Activated CD4-positive, alpha-beta memory T cell treated with anti-CD3 and anti-CD28 coated beads for 36 hours (primary cell): ENCODE measurements at regions of chr1 and their contacts with region 1.

Region 1: DNA sequence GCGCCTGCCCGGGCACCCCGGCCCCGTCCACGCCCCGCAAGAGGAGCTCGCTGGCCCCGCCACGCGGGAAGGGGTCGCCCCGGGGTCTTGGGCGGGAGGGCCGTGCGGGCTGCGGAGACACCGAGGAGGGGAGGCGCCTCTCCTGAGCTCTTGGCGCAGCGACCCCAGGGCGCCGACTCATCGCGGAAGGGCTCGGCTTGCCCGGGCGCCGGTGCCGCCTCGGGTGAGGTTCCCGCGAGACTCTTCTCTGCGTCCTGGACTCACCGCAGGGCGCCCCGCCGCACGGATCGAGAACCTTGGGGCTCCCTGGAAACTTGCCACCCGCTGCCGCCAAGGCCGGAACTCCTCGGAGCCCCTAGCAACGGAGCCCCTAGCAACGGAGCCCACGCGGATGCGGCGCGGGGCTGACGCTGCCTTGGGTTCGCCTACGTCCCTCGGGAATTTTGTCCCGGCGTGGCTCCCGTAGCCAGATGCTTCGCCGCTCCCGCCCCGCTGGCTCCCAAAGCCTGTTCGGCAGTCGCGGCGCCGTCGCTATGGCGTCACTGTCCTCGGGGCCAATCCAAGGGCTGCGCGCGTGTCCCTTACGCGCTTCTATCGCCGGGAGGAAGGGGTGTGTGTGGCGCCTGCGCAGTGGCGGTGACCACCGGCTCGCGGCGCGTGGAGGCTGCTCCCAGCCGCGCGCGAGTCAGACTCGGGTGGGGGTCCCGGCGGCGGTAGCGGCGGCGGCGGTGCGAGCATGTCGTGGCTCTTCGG is at the start of gene ATAD3A:
- DNase-seq: peak; percentile 99
- H3K4me3 Mint-ChIP-seq: peak within 1 kb of the TSS; percentile 84
- H3K27ac Mint-ChIP-seq: peak within 1 kb of the TSS; percentile 86
- H3K4me1 Mint-ChIP-seq: peaks cover 13% of the 10 kb centered on the region
- H3K27me3 Mint-ChIP-seq: no peaks in the 10 kb centered on the region
- total RNA-seq, gene ATAD3A: 45.7 to 46.7 TPM

Region 2: DNA sequence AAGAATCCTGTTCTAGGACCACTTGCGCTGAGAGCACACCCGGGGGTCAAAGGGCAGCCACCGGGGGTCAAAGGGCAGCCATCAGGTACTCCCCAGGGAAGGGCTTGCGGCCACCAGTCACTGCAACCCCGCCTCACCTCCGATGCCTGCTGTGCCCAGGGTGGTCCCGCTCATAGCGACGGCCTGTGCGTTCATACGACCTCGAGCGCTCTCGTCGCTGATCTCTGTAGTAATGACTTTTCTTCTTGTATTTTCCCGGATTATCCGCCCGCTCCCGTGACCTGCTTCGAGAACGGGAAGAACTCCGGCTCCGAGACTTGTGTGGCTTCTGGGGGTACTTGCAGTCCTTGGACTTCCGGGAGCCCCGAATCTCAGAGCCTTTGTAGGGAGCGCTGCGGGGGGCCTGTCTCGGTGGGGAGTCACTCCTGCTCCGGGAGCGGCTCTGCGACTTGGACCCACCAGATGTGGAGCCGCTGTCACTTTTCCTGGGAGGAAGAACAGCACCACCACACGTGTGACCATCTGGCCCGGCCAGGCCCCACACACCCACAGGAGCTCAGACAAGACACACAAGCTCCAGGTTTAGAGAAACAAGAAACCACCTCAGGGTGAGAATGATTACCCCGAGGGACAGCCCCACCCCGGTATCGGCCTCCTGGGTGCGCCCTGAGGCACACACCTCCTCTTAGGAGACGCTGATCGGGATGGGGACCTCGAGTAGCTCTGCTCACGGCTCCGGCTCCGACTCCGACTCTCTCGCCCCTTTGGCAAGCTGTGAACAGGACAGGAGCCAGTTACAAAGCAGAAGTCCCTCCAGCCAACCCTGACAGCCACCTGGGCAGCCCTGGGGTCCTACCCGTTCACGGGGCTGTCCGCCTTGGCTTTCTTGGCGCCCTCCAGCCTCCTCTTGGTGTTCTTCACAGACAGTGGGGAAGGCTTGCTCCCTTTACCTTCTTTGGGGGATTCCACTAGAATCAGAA is 124.3 kb before region 1 on chr1:
- CTCF ChIA-PET with region 1: no interaction called
- POLR2A ChIA-PET with region 1: no interaction called
- intact Hi-C with region 1: no loop called
- DNase-seq: no peak
- H3K4me3 Mint-ChIP-seq: no peak overlapping the region
- H3K27ac Mint-ChIP-seq: no peak overlapping the region
- H3K4me1 Mint-ChIP-seq: no peaks in the 10 kb centered on the region
- H3K27me3 Mint-ChIP-seq: no peaks in the 10 kb centered on the region

Region 3: GRCh38 chr1:1406817-1407635 is 104.7 kb before region 1 on chr1 and contains the start of gene MRPL20:
- CTCF ChIA-PET with region 1: no interaction called
- POLR2A ChIA-PET with region 1: no interaction called
- intact Hi-C with region 1: loop called (anchors 10 kb)
- DNase-seq: peak; percentile 98
- H3K4me3 Mint-ChIP-seq: peak within 1 kb of the TSS; percentile 93
- H3K27ac Mint-ChIP-seq: peak within 1 kb of the TSS; percentile 94
- H3K4me1 Mint-ChIP-seq: peaks cover 48% of the 10 kb centered on the region
- H3K27me3 Mint-ChIP-seq: no peaks in the 10 kb centered on the region
- total RNA-seq, gene MRPL20: 122 to 123 TPM

Region 4: DNA sequence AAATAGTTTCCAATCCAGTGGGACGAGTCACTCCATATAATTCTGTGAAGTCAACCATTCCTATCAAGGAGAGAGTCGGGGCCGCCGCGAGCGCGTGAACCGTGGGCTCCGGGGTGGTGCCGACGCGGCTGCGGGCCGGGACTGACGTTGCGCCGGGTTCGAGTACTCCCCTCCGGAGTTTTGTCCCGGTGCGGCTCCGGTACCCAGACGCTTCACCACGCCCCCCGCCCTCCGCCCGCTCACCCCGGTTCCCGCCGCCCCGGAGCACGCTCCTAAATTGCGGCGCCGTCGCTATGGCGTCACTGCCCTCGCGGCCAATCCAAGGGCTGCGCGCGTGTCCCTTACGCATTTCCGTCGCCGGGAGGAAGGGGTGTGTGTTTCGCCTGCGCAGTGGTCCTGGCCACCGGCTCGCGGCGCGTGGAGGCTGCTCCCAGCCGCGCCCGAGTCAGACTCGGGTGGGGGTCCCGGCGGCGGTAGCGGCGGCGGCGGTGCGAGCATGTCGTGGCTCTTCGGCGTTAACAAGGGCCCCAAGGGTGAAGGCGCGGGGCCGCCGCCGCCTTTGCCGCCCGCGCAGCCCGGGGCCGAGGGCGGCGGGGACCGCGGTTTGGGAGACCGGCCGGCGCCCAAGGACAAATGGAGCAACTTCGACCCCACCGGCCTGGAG is 40.2 kb before region 1 on chr1 and contains the start of gene ATAD3B:
- CTCF ChIA-PET with region 1: no interaction called
- POLR2A ChIA-PET with region 1: no interaction called
- intact Hi-C with region 1: loop called (anchors 2 kb)
- DNase-seq: peak; percentile 97
- H3K4me3 Mint-ChIP-seq: peak within 1 kb of the TSS; percentile 80
- H3K27ac Mint-ChIP-seq: peak within 1 kb of the TSS; percentile 49
- H3K4me1 Mint-ChIP-seq: peaks cover 26% of the 10 kb centered on the region
- H3K27me3 Mint-ChIP-seq: no peaks in the 10 kb centered on the region
- total RNA-seq, gene ATAD3B: 35.4 to 36.3 TPM